Motor neuron (in vitro differentiated cells): ENCODE measurements at regions of chr15 and their contacts with region 1.

Region 1: GRCh38 chr15:42955518-42955917 is 34.9 kb upstream of the TTBK2 start:
- ATAC-seq: no peak
- H3K4me3 ChIP-seq: no peak overlapping the region
- H3K27ac ChIP-seq: no peak overlapping the region
- H3K4me1 ChIP-seq: no peaks in the 10 kb centered on the region

Region 2: DNA sequence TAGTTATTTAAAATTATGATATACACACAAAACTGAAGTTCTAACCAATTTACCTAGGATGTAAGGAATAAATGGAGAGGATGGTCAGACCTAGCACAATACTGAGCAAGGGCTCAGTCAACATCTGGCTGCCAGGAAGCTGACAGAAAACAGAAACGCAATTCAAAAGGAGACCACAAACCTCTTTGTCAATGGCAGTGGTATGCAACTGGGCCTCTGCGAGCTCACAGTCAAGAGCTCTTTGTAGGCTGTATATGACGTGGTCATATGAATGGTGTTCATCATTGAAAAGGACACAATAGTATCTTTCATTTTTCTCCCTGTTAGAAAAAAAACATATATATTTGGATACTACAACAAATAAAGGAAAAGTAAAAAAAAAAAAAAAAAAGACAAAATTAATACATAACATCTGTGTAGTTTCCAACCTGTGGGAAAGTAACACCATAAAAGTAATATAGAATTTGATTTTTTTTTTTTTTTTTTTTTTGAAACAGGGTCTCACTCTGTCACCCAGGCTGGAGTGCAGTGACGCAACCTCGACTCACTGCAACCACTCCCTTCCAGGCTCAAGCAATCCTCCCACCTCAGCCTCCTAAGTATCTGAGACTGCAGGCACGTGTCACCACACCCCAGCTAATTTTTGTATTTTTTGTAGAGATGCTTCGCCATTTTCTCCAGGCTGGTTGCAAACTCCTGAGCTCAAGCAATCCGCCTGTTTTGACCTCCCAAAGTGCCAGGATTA is 112.4 kb after region 1 on chr15:
- in situ Hi-C with region 1: loop called in 1 of 9 experiments (anchors 25 kb)
- ATAC-seq: peak in 2 of 8 experiments; percentile 47 to 57
- H3K4me3 ChIP-seq: no peak overlapping the region
- H3K27ac ChIP-seq: no peak overlapping the region
- H3K4me1 ChIP-seq: no peaks in the 10 kb centered on the region

Region 3: GRCh38 chr15:43239732-43240491 is 284.4 kb after region 1 on chr15:
- in situ Hi-C with region 1: no loop called
- ATAC-seq: no peak
- H3K4me3 ChIP-seq: no peak overlapping the region
- H3K27ac ChIP-seq: no peak overlapping the region
- H3K4me1 ChIP-seq: no peaks in the 10 kb centered on the region